HEK293T (cell line): ENCODE measurements at regions of chrX and their contacts with region 1.

Region 1: DNA sequence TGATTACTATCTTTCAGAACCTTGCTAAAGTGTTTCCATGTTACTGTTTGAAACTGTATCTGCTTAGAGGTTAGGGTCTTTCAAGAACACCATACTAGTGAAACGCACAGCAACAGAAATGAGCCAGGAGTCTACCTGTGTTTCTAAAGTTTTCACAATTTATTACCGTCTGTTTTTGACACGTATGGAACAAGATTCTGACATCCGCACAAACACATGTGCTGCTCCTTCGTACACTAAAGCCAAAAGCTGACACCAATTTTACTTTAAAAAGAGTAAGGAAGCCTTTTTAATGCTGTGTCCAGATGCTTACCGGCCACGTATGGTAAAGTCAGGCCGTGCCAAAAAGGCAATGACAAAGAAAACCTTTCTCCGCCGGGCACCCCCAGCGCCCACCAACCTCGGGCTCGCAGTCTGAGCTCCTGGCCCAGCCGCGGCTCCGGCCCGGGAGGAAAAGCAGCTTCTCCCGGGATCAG is 532 bp downstream of the RPS4X start:
- DNase-seq: no peak

Region 2: GRCh38 chrX:72169008-72169728 is 107.3 kb before region 1 on chrX:
- CTCF ChIA-PET with region 1: no interaction called
- POLR2A ChIA-PET with region 1: no interaction called
- DNase-seq: no peak

Region 3: DNA sequence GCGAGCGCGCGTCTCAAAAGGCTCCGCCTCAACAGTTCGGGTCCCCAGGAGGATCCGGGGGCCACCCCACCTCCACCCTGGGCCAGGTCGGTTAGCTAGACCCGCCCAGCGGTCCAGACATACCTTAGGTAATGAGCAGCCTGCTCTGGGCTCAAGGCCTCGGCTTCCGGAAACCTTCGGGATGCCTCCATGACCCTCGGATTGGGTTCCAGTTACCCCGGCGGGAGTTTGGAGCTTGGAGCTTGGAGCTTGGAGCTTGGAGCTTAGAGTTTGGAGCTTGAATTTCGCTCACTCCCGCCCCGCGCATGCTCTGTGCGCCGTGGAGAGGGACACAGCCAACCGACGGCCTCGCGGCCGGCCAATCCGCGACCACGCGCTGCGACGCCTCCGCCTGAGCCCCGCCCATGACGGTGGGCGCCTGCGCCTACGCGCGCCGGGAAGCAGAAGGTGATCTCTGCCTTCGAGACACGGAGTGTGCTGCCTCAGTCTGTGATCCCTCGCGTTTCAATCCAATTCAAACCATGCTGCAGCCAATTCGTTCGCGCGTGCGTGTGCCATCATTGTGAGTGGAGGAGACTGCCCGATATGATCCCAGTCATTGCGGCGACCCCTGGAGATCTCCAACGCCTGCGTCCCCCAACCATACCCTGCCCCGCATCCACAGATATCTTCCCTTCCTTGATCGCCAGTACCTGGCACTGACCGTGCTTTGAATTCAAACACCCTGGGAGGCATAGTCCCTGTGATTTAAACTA is 37.6 kb before region 1 on chrX and contains the start of gene ERCC6L:
- CTCF ChIA-PET with region 1: no interaction called
- POLR2A ChIA-PET with region 1: interaction called, 37 read pairs
- DNase-seq: peak; percentile 94

Region 4: GRCh38 chrX:72253686-72254085 is 22.8 kb before region 1 on chrX:
- CTCF ChIA-PET with region 1: no interaction called
- POLR2A ChIA-PET with region 1: interaction called, 13 read pairs
- DNase-seq: no peak

Region 5: GRCh38 chrX:72297953-72298730 is 21.6 kb after region 1 on chrX:
- CTCF ChIA-PET with region 1: interaction called, 5 read pairs
- POLR2A ChIA-PET with region 1: interaction called, 16 read pairs
- DNase-seq: peak; percentile 57

Region 6: GRCh38 chrX:72316408-72317110 is 40.0 kb after region 1 on chrX:
- CTCF ChIA-PET with region 1: interaction called, 4 read pairs
- POLR2A ChIA-PET with region 1: interaction called, 10 read pairs
- DNase-seq: no peak